ENCODE measurements at regions of chr16 and their contacts with region 1.

Region 1: DNA sequence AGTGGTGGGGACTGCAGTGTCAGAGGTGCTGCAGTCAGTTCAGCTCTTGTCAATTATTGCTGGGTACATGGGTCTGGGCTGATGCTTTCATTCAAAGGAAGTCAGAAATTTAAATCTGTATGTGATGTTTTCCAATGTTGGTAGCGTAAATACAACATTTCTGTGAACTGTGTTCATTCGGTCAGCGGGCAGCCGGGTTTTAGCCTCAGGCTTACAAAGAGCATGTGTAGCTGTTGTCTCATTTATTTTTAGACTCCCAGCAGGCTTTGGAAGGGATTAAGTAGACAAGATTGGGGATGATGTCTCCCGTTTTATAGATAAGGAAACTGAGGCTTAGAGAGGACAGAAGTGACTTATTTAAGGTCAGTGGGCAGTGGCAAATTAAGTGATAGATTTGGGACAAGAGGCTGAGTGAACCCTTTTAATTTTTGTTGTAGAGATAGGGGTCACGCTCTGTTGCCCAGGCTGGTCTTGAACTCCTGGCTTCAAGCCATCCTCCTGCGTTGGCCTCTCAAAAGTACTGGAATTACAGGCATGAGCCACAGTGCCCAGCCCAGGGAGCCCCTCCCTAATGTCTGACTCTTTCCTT is 8.1 kb downstream of the AQP8 start:
- DNase-seq: no peak
- H3K4me3 ChIP-seq: no peak overlapping the region
- H3K27ac ChIP-seq: no peak overlapping the region
- H3K4me1 ChIP-seq: no peaks in the 10 kb centered on the region
- H3K27me3 ChIP-seq: no peaks in the 10 kb centered on the region
- CTCF ChIP-seq: no peak

Region 2: GRCh38 chr16:24516900-24517669 is 707.7 kb before region 1 on chr16:
- CTCF ChIA-PET with region 1: no interaction called
- POLR2A ChIA-PET with region 1: no interaction called
- intact Hi-C with region 1: loop called (anchors 1 kb)
- DNase-seq: peak; percentile 79 to 83
- H3K4me3 ChIP-seq: no peak overlapping the region
- H3K27ac ChIP-seq: no peak overlapping the region
- H3K4me1 ChIP-seq: peaks cover 18% of the 10 kb centered on the region
- H3K27me3 ChIP-seq: no peaks in the 10 kb centered on the region
- CTCF ChIP-seq: peak; percentile 94

Region 3: GRCh38 chr16:25051406-25052150 is 173.2 kb before region 1 on chr16:
- CTCF ChIA-PET with region 1: interaction called, 5 read pairs
- POLR2A ChIA-PET with region 1: no interaction called
- intact Hi-C with region 1: loop called (anchors 1 kb)
- DNase-seq: peak; percentile 23 to 69
- H3K4me3 ChIP-seq: no peak overlapping the region
- H3K27ac ChIP-seq: no peak overlapping the region
- H3K4me1 ChIP-seq: peaks cover 38% of the 10 kb centered on the region
- H3K27me3 ChIP-seq: no peaks in the 10 kb centered on the region
- CTCF ChIP-seq: no peak

Region 4: DNA sequence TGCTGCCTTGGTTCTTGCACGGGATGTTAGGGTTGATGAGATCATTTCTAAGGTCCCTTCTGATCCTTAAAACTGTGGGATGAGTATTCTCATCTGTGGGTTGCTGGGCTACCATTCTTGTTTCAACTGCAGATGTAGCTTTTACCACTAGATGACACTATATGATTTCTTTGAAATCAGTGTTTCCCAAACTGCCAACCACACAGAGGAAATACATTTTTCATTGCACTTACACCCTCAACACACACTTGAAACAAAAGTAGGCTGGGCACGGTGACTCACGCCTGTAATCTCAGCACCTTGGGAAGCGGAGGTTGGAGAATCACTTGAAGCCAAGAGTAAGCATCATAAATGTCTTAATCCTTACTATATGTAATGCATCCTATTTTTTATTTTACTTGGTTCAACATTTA is 98.0 kb before region 1 on chr16:
- CTCF ChIA-PET with region 1: interaction called, 20 read pairs
- POLR2A ChIA-PET with region 1: no interaction called
- intact Hi-C with region 1: loop called (anchors 1 kb)
- DNase-seq: peak; percentile 67 to 81
- H3K4me3 ChIP-seq: no peak overlapping the region
- H3K27ac ChIP-seq: no peak overlapping the region
- H3K4me1 ChIP-seq: peaks cover 9% of the 10 kb centered on the region; the same call in 1 of the 2 replicates
- H3K27me3 ChIP-seq: no peaks in the 10 kb centered on the region
- CTCF ChIP-seq: peak; percentile 77

Region 5: GRCh38 chr16:25143928-25144327 is 80.9 kb before region 1 on chr16:
- CTCF ChIA-PET with region 1: interaction called, 11 read pairs
- POLR2A ChIA-PET with region 1: no interaction called
- intact Hi-C with region 1: no loop called
- DNase-seq: no peak
- H3K4me3 ChIP-seq: no peak overlapping the region
- H3K27ac ChIP-seq: no peak overlapping the region
- H3K4me1 ChIP-seq: no peaks in the 10 kb centered on the region
- H3K27me3 ChIP-seq: no peaks in the 10 kb centered on the region
- CTCF ChIP-seq: peak; percentile 47

Region 6: DNA sequence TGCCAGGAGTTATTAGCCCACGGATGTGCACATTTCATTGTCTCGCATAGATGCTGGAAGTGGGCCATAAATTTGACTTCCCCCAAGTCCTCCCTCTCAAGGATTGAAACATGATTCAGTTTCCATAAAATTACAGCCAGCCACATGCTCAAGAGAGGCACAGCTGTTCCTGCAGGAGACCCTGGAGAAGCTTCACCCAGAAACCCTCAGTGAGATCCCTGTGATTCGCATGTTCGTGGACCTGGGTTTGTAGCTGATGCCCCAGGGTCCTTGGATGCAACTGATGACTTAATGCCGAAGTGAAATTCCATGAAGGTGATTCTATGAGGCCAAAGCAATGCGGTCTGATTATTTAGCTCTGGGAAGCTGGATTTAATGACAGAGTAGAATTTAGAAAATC is 32.7 kb before region 1 on chr16:
- CTCF ChIA-PET with region 1: no interaction called
- POLR2A ChIA-PET with region 1: no interaction called
- intact Hi-C with region 1: no loop called
- DNase-seq: no peak
- H3K4me3 ChIP-seq: no peak overlapping the region
- H3K27ac ChIP-seq: no peak overlapping the region
- H3K4me1 ChIP-seq: no peaks in the 10 kb centered on the region
- H3K27me3 ChIP-seq: no peaks in the 10 kb centered on the region
- CTCF ChIP-seq: no peak

Region 7: GRCh38 chr16:25235991-25236390 is 11.2 kb after region 1 on chr16:
- CTCF ChIA-PET with region 1: interaction called, 15 read pairs
- POLR2A ChIA-PET with region 1: no interaction called
- intact Hi-C with region 1: no loop called
- DNase-seq: no peak
- H3K4me3 ChIP-seq: no peak overlapping the region
- H3K27ac ChIP-seq: no peak overlapping the region
- H3K4me1 ChIP-seq: no peaks in the 10 kb centered on the region
- H3K27me3 ChIP-seq: peaks cover 3% of the 10 kb centered on the region; the same call in 1 of the 2 replicates
- CTCF ChIP-seq: no peak

Region 8: DNA sequence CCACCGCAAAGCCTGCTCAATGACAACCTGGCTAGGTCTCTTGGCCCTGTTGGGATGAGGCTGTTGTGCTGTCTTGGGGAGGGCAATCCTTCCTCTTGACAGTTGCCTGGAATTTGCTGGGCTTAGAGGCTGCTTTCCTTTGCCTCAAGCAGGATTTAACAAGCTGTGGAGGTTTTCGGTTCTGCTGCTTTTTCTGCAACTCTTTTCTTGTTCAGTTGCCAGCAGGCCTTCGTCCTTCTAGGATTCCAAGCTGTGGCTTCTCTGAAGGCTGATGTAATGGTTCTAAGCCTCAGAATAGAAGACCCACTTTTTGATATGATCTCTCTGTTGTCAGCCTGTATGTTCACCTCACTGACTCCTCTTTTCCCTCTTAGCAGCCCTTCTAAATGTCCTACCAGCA is 317.5 kb after region 1 on chr16:
- CTCF ChIA-PET with region 1: no interaction called
- POLR2A ChIA-PET with region 1: no interaction called
- intact Hi-C with region 1: no loop called
- DNase-seq: no peak
- H3K4me3 ChIP-seq: no peak overlapping the region
- H3K27ac ChIP-seq: no peak overlapping the region
- H3K4me1 ChIP-seq: no peaks in the 10 kb centered on the region
- H3K27me3 ChIP-seq: 0 out of 2 replicates have a peak, but pooled peaks cover 4% of the 10 kb centered on the region
- CTCF ChIP-seq: no peak

Measured in PC-9 (cell line).